Caco-2 (cell line): ENCODE measurements at regions of chr1 and their contacts with region 1.

Region 1: DNA sequence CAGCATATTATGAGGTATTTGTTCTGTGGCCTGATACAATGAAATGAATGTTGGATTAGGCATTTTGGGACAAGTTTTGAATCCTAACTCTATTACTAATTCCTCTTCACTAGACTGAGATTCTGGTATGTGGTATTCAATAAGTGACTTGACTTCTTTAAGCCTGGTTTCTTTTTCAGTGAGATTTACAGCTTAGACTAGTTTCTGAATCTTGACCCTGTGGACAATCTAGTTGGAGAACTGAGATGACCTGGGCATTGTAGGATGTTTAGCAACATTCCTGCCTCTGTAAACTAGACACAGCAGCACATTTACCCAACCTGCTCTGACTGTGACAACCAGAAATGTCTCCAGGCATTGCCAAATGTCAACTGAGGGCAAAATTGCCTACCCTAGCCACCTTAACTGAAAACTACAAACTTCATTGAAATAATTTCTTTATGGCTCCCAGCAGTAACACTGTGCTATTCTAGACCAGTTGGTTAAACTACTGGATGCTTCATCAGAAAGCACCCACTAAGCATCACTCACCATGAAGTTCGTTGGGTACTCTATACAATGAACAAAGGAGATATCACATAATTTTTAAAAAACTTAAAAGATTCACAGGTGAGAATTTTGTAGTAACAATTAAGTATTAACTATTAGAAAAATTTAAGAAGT is 16.8 kb downstream of the PTPRC start:
- DNase-seq: no peak
- H3K4me3 ChIP-seq: no peak overlapping the region
- H3K4me3 Mint-ChIP-seq: no peak overlapping the region
- H3K27ac Mint-ChIP-seq: no peak overlapping the region
- H3K4me1 ChIP-seq: peaks cover 3% of the 10 kb centered on the region; the same call in 1 of the 2 replicates
- H3K4me1 Mint-ChIP-seq: no peaks in the 10 kb centered on the region
- H3K27me3 ChIP-seq: no peaks in the 10 kb centered on the region
- H3K27me3 Mint-ChIP-seq: no peaks in the 10 kb centered on the region
- CTCF ChIP-seq: no peak

Region 2: DNA sequence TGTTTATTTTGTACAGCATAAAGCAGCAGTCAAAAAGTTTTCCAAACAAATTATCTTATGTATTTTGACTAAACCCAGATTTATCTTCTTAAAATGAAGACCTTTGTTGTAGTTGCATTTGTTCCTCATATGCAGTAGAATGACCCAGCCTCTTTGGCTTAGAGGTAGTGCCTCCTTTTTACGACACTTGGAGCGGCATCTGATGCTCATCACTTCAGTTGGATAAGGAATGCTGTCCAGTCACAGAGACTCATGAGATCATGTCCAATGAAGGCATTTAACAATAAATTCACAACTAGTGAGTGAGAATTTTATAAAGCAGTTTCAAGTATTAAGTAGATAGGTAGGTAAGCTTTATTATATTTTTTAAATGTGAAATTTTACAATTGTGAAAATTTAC is 18.4 kb after region 1 on chr1:
- CTCF ChIA-PET with region 1: no interaction called
- POLR2A ChIA-PET with region 1: no interaction called
- intact Hi-C with region 1: loop called (anchors 2 kb)
- DNase-seq: no peak
- H3K4me3 ChIP-seq: no peak overlapping the region
- H3K4me3 Mint-ChIP-seq: no peak overlapping the region
- H3K27ac Mint-ChIP-seq: no peak overlapping the region
- H3K4me1 ChIP-seq: no peaks in the 10 kb centered on the region
- H3K4me1 Mint-ChIP-seq: peaks cover 16% of the 10 kb centered on the region
- H3K27me3 ChIP-seq: no peaks in the 10 kb centered on the region
- H3K27me3 Mint-ChIP-seq: no peaks in the 10 kb centered on the region
- CTCF ChIP-seq: no peak